Activated CD4-positive, alpha-beta T cell treated with anti-CD3 and anti-CD28 coated beads, Interleukin-2, amount 10 ng/mL, durations not matched to agents 24 days and 14 days (primary cell): ENCODE measurements at regions of chr10 and their contacts with region 1.

Region 1: GRCh38 chr10:45000752-45001380 is at the start of gene ZNF22:
- DNase-seq: peak; percentile 90
- H3K4me3 Mint-ChIP-seq: peak within 1 kb of the TSS; percentile 94
- H3K27ac Mint-ChIP-seq: peak within 1 kb of the TSS; percentile 96
- H3K4me1 Mint-ChIP-seq: peaks cover 24% of the 10 kb centered on the region
- H3K27me3 Mint-ChIP-seq: peaks cover 9% of the 10 kb centered on the region
- total RNA-seq, gene ZNF22: 26.0 and 26.7 TPM in 2 replicates

Region 2: DNA sequence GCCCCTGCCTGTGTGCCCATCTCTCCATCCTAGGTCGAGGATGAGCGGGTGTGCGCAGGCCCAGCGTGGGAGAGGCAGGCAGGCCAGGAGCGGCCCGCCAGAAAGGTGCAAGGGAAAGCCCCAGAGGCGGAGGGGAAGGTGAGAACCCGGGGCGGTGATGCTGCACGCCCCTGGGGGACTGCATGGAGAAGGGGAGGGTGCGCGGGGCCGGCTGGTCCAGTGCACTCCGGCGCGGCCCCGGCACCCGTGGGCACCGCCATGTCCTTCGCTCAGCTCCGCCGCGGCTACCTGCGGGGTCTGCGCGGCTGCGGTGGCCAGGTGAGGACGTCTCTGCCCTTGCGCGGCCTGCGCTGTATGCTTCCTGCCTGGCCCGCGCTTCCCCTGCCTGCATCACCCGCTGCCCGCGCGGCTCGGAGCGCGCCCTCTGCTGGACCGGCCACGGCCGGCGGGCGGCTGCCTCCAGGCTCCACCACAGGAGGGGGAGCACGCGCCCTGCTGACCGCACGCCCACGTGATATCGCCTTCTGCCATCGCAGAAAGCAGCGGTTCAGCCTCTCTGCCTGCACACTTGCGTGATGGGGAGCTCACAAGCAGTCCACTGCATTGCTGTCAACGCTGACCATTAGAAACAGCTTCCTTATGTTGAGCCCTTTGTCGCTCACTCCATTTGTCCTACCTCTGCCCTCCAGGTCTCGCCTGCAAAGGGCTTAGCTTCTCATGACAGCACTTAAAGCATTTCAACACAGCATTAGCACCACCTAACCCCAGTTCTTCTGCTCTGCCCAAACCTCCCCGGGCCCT is 689.9 kb before region 1 on chr10:
- intact Hi-C with region 1: no loop called
- DNase-seq: peak; percentile 91
- H3K4me3 Mint-ChIP-seq: peak overlapping the region; percentile 16
- H3K27ac Mint-ChIP-seq: no peak overlapping the region
- H3K4me1 Mint-ChIP-seq: peaks cover 4% of the 10 kb centered on the region
- H3K27me3 Mint-ChIP-seq: peaks cover 4% of the 10 kb centered on the region

Region 3: DNA sequence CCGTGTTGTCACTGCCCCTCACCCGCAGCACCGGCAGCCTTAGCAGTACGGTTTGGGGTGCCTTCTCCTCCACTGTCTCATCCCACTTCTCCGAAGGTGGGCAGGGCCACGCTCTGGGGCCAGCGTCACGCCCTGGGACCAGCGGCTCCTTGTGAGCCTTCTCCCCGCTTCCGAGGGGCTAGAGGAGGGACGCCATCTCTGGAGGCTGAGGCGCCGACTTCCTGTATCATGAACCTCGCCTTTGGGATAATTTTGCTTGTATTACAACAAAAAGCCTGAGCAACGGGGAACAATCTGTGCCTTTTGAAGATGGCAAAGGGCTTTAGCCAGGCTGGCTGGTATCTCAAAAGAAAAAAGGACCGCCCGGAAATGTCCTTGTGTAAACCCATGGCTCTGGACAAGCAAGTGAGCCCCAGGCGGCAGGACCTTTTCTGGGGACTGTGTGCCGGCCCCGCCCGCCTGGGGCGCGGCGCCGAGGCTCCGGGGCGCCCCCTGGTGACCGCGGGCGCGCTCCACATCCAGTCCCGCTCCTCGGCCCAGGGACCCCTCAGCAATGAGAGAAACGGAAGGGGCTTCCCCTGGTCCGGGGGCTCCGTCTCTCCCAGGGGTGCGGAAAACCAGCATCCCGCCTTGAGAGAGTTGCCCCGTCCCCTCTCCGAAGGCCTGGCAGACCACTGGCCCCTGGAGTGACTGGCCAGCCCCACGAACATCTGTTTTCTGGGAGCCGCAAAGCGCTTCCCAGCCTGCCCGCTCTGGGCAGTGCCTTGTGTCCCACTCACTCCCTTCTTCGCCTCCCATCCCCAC is 26.0 kb before region 1 on chr10:
- intact Hi-C with region 1: loop called (anchors 2 kb)
- DNase-seq: peak; percentile 93
- H3K4me3 Mint-ChIP-seq: peak overlapping the region; percentile 77
- H3K27ac Mint-ChIP-seq: peak overlapping the region; percentile 80
- H3K4me1 Mint-ChIP-seq: peaks cover 22% of the 10 kb centered on the region
- H3K27me3 Mint-ChIP-seq: no peaks in the 10 kb centered on the region